Activated naive CD8-positive, alpha-beta T cell treated with anti-CD3 and anti-CD28 coated beads, Interleukin-2, amount 10 ng/mL, durations not matched to agents 7 days and 5 days (primary cell): ENCODE measurements at regions of chr20 and their contacts with region 1.

Region 1: GRCh38 chr20:18507218-18508021 is at the start of gene SEC23B:
- DNase-seq: peak; percentile 96
- ATAC-seq: peak; percentile 95
- H3K4me3 Mint-ChIP-seq: peak within 1 kb of the TSS; percentile 98
- H3K27ac Mint-ChIP-seq: peak within 1 kb of the TSS; percentile 98
- H3K4me1 Mint-ChIP-seq: peaks cover 28% of the 10 kb centered on the region
- H3K27me3 Mint-ChIP-seq: peaks cover 2% of the 10 kb centered on the region
- total RNA-seq, gene SEC23B: 64.0 to 65.0 TPM

Region 2: GRCh38 chr20:18466894-18467730 is 40.3 kb before region 1 on chr20 and contains the starts of genes DZANK1 and POLR3F:
- POLR2A ChIA-PET with region 1: interaction called, 33 read pairs
- DNase-seq: peak; percentile 94
- ATAC-seq: peak; percentile 98
- H3K4me3 Mint-ChIP-seq: peak within 1 kb of the TSS; percentile 99
- H3K27ac Mint-ChIP-seq: peak within 1 kb of the TSS; percentile 92
- H3K4me1 Mint-ChIP-seq: peaks cover 20% of the 10 kb centered on the region
- H3K27me3 Mint-ChIP-seq: no peaks in the 10 kb centered on the region
- total RNA-seq, gene DZANK1: 1.8 to 2.2 TPM
- total RNA-seq, gene POLR3F: 8.3 to 8.5 TPM

Region 3: DNA sequence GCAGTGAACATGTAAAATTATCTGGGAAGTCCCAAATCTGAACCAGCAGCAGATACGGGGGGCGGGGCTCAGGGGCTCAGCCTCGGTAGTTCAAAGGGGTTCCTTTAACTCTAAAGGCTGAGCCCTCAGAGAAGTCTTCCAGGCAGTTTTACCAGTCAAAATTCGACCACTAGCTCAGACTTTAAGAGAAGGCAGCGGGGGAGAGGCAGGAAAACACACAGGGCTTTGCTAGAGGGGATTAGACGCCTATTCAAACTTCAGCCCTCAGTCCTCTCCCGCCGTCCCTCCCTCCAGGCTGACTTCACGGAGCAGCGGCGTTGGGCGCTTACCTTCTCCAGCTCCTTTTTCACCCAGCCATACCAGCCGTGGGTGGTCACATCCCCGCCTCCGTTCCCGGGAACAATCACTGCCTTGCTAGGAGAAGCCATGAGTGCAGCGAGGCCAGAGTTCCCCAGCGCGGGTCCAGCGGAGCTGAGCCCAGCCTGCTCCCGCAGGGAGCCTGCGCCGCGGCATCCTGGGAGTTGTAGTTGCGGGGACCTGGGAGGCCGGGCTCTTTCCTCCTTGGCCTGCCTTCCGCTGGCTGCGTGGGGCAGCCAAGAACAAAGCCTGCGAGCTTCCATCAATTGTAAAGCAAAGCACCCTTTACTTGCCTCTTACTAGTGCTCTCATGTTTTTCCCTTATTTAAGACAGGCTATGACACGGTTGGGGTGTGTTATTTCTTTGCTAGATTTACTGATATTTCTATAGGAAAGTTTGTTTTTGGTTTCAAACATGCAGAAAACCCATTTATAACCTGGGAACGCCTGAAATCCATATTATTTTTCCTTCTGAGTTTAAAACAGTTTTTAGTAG is 10.5 kb before region 1 on chr20 and contains the start of gene RBBP9:
- POLR2A ChIA-PET with region 1: interaction called, 64 read pairs
- DNase-seq: peak; percentile 79
- ATAC-seq: peak; percentile 100
- H3K4me3 Mint-ChIP-seq: peak within 1 kb of the TSS; percentile 97
- H3K27ac Mint-ChIP-seq: peak within 1 kb of the TSS; percentile 82
- H3K4me1 Mint-ChIP-seq: peaks cover 13% of the 10 kb centered on the region
- H3K27me3 Mint-ChIP-seq: no peaks in the 10 kb centered on the region
- total RNA-seq, gene RBBP9: 13.9 to 15.2 TPM

Region 4: GRCh38 chr20:18537651-18538050 is 30.2 kb after region 1 on chr20:
- POLR2A ChIA-PET with region 1: no interaction called
- DNase-seq: no peak
- ATAC-seq: no peak
- H3K4me3 Mint-ChIP-seq: no peak overlapping the region
- H3K27ac Mint-ChIP-seq: no peak overlapping the region
- H3K4me1 Mint-ChIP-seq: no peaks in the 10 kb centered on the region
- H3K27me3 Mint-ChIP-seq: no peaks in the 10 kb centered on the region

Region 5: GRCh38 chr20:18553746-18554145 is 46.3 kb after region 1 on chr20:
- POLR2A ChIA-PET with region 1: no interaction called
- DNase-seq: no peak
- ATAC-seq: no peak
- H3K4me3 Mint-ChIP-seq: no peak overlapping the region
- H3K27ac Mint-ChIP-seq: no peak overlapping the region
- H3K4me1 Mint-ChIP-seq: no peaks in the 10 kb centered on the region
- H3K27me3 Mint-ChIP-seq: no peaks in the 10 kb centered on the region

Region 6: GRCh38 chr20:18566892-18567742 is 59.7 kb after region 1 on chr20 and contains the start of gene SMIM26:
- POLR2A ChIA-PET with region 1: interaction called, 12 read pairs
- DNase-seq: peak; percentile 94
- ATAC-seq: peak; percentile 99
- H3K4me3 Mint-ChIP-seq: peak within 1 kb of the TSS; percentile 95
- H3K27ac Mint-ChIP-seq: peak within 1 kb of the TSS; percentile 95
- H3K4me1 Mint-ChIP-seq: peaks cover 8% of the 10 kb centered on the region
- H3K27me3 Mint-ChIP-seq: no peaks in the 10 kb centered on the region
- total RNA-seq, gene SMIM26: 59.1 to 62.4 TPM

Region 7: GRCh38 chr20:18754030-18754652 is 246.7 kb after region 1 on chr20:
- POLR2A ChIA-PET with region 1: no interaction called
- DNase-seq: no peak
- ATAC-seq: no peak
- H3K4me3 Mint-ChIP-seq: no peak overlapping the region
- H3K27ac Mint-ChIP-seq: no peak overlapping the region
- H3K4me1 Mint-ChIP-seq: peaks cover 5% of the 10 kb centered on the region
- H3K27me3 Mint-ChIP-seq: no peaks in the 10 kb centered on the region